AG04450 (cell line): ENCODE measurements at regions of chr14 and their contacts with region 1.

Region 1: GRCh38 chr14:34098045-34098984 is 147.4 kb upstream of the EGLN3 start:
- DNase-seq: no peak
- H3K4me3 ChIP-seq: no peak overlapping the region
- H3K27ac ChIP-seq: no peak overlapping the region
- H3K27me3 ChIP-seq: peaks cover 4% of the 10 kb centered on the region
- CTCF ChIP-seq: peak; percentile 66

Region 2: DNA sequence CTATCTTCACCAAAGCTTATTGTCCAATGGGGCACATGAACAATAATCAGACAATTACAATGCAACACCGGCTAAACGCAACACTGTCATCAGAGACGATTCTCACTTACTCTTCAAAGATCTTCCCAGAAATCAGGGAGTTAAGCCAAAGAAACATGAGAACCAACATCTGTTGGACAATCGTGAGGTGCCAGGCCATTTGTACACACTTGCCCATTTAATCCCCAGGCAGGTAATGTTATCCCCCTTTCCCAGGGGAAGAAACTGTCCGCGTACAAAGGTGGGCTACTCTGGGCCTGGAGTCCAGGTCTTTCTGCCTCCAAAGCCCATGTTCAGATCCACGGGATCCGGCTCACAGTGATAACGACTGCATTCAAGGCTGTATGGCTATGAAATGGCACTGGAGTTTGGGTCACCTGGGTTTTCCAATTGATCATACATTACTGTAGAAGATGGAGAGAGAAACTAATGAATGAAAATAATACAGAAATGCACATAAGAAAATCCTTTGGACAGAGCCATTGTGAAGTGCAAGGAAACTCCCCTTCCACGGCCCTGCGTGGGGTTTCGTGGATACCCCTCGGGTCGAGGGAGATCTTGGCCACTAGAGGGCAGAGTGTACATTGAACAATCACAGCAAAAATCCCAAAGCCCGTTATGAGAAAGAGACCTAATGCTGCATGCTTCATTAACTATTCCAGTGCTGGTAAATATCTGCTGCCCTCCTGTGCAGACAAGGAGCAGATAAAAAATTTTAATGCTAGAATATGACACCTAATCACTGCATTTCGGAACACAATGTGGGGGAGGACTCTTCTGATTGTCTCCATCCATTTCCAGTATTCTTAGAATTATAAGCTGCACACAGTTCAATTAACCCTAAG is 258.9 kb before region 1 on chr14:
- CTCF ChIA-PET with region 1: interaction called, 40 read pairs
- POLR2A ChIA-PET with region 1: no interaction called
- DNase-seq: no peak
- H3K4me3 ChIP-seq: no peak overlapping the region
- H3K27ac ChIP-seq: no peak overlapping the region
- H3K27me3 ChIP-seq: no peaks in the 10 kb centered on the region
- CTCF ChIP-seq: peak; percentile 75

Region 3: DNA sequence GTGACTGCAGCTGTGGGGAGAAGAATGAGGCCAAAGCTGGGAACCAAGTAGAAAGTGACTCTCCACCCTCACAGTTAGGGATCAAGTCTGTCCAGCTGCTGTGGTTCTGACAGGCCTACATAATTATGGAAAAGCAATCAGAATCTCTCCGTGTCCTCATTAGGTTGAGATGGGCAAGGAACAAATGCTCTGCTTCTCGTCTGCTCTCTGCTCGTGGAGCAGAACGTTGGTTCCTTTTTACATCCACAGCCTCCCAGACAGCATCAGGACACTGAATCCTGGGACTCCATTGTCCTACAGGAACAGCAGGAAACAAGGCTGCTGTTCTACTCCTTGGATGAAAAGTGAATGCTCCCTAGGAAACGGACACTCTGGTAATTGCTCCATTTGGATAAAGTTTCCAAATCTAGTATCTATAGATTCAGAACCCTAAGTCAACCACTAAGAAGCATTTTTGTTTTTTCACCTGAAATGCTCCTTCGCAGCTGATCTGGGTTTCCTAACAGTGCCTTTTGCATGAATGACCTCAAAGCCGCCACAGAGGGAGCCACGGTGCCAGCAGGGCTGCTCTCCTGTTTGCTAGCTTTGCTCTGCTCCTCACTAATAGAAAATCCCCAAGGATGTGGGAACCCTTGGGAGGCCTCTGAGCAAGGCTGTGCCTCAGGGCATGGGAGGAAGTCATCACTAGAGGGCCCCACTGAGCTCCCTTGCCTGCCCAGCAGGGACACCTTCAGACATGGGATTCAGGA is 249.4 kb before region 1 on chr14:
- CTCF ChIA-PET with region 1: interaction called, 39 read pairs
- POLR2A ChIA-PET with region 1: no interaction called
- DNase-seq: no peak
- H3K4me3 ChIP-seq: no peak overlapping the region
- H3K27ac ChIP-seq: no peak overlapping the region
- H3K27me3 ChIP-seq: no peaks in the 10 kb centered on the region
- CTCF ChIP-seq: peak; percentile 47